IMR-90 (cell line): ENCODE measurements at regions of chr7 and their contacts with region 1.

Region 1: GRCh38 chr7:73792594-73793292 is 22.7 kb upstream of the CLDN3 start:
- DNase-seq: peak; percentile 35
- ATAC-seq: peak; percentile 35; the same call in 1 of the 2 replicates
- H3K4me3 ChIP-seq: no peak overlapping the region
- H3K27ac ChIP-seq: no peak overlapping the region
- H3K4me1 ChIP-seq: no peaks in the 10 kb centered on the region
- H3K27me3 ChIP-seq: no peaks in the 10 kb centered on the region
- CTCF ChIP-seq: no peak
- POLR2A ChIP-seq: no peak
- RAD21 ChIP-seq: no peak

Region 2: DNA sequence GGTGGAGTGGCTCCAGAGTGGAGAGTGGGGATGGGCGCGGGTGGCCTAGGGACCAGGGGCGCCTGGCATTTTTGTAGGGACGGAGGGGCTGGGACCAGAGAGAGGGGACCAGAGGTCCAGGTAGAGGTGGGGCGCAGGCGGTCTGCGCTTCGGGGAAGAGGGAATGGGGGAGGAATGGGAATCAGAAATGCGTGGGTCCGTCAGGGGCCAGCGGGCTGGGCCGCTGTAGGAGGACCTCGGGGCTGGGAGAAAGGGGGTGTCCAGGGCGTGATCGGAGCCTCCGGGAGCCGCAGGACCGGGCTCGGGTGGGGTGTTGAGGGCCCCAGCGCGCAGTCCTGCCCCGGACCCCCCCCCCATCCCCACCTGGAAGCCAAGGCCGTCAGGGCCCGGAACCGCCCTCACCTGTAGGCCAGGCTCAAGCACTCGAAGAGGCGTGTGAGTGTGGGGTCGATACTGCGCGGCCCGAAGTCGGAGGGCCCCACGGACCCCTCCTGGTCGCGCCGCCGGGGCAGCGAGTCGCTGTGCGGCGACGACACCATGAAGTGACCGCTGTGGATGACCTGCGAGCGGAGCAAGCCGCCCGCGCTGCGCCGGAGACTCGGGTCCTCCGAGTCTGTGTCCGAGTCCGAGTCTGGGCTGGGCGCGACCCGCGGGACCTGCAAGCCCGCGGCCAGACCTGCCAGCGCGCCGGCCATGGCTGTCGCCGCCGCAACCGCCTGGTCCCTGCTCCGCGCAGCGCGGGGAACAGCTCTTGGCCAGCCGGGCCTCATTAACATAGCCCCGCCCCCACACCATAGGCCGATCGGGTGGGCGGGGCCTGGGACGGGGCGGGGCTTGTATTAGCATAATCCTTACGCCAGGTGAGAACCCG is 168.7 kb before region 1 on chr7 and contains the start of gene MLXIPL:
- CTCF ChIA-PET with region 1: no interaction called
- POLR2A ChIA-PET with region 1: interaction called, 17 read pairs
- dilution Hi-C with region 1: no loop called
- in situ Hi-C with region 1: no loop called
- intact Hi-C with region 1: no loop called
- DNase-seq: no peak
- ATAC-seq: peak; percentile 95
- H3K4me3 ChIP-seq: peak within 1 kb of the TSS; percentile 46
- H3K27ac ChIP-seq: no peak within 1 kb of the TSS
- H3K4me1 ChIP-seq: peaks cover 5% of the 10 kb centered on the region; the same call in 1 of the 2 replicates
- H3K27me3 ChIP-seq: peaks cover 71% of the 10 kb centered on the region
- CTCF ChIP-seq: no peak
- POLR2A ChIP-seq: no peak
- RAD21 ChIP-seq: no peak
- total RNA-seq, gene MLXIPL: not detected in 2 replicates

Region 3: GRCh38 chr7:73738612-73739374 is 54.0 kb before region 1 on chr7 and contains the start of gene ABHD11:
- CTCF ChIA-PET with region 1: no interaction called
- POLR2A ChIA-PET with region 1: no interaction called
- dilution Hi-C with region 1: no loop called
- in situ Hi-C with region 1: no loop called
- intact Hi-C with region 1: loop called (anchors 10 kb)
- DNase-seq: peak; percentile 93
- ATAC-seq: peak; percentile 94
- H3K4me3 ChIP-seq: peak within 1 kb of the TSS; percentile 99
- H3K27ac ChIP-seq: peak within 1 kb of the TSS; percentile 69
- H3K4me1 ChIP-seq: peaks cover 7% of the 10 kb centered on the region
- H3K27me3 ChIP-seq: no peaks in the 10 kb centered on the region
- CTCF ChIP-seq: no peak
- POLR2A ChIP-seq: 0 out of 2 replicates have a peak, but pooled peaks have one; percentile 40
- RAD21 ChIP-seq: no peak
- total RNA-seq, gene ABHD11: 13.4 and 14.2 TPM in 2 replicates

Region 4: GRCh38 chr7:74002474-74003017 is 209.8 kb after region 1 on chr7:
- CTCF ChIA-PET with region 1: no interaction called
- POLR2A ChIA-PET with region 1: no interaction called
- dilution Hi-C with region 1: no loop called
- in situ Hi-C with region 1: no loop called
- intact Hi-C with region 1: no loop called
- DNase-seq: peak; percentile 78
- ATAC-seq: peak; percentile 53
- H3K4me3 ChIP-seq: no peak overlapping the region
- H3K27ac ChIP-seq: peak overlapping the region; percentile 83
- H3K4me1 ChIP-seq: peaks cover 23% of the 10 kb centered on the region
- H3K27me3 ChIP-seq: no peaks in the 10 kb centered on the region
- CTCF ChIP-seq: no peak
- POLR2A ChIP-seq: no peak
- RAD21 ChIP-seq: peak; percentile 8; the same call in 1 of the 2 replicates

Region 5: GRCh38 chr7:74104703-74105102 is 312.0 kb after region 1 on chr7:
- CTCF ChIA-PET with region 1: no interaction called
- POLR2A ChIA-PET with region 1: no interaction called
- dilution Hi-C with region 1: no loop called
- in situ Hi-C with region 1: no loop called
- intact Hi-C with region 1: no loop called
- DNase-seq: peak; percentile 54
- ATAC-seq: peak; percentile 48
- H3K4me3 ChIP-seq: no peak overlapping the region
- H3K27ac ChIP-seq: no peak overlapping the region
- H3K4me1 ChIP-seq: peaks cover 3% of the 10 kb centered on the region; the same call in 1 of the 2 replicates
- H3K27me3 ChIP-seq: no peaks in the 10 kb centered on the region
- CTCF ChIP-seq: no peak
- POLR2A ChIP-seq: no peak
- RAD21 ChIP-seq: no peak